OCI-LY7 (cell line): ENCODE measurements at regions of chr5 and their contacts with region 1.

Region 1: DNA sequence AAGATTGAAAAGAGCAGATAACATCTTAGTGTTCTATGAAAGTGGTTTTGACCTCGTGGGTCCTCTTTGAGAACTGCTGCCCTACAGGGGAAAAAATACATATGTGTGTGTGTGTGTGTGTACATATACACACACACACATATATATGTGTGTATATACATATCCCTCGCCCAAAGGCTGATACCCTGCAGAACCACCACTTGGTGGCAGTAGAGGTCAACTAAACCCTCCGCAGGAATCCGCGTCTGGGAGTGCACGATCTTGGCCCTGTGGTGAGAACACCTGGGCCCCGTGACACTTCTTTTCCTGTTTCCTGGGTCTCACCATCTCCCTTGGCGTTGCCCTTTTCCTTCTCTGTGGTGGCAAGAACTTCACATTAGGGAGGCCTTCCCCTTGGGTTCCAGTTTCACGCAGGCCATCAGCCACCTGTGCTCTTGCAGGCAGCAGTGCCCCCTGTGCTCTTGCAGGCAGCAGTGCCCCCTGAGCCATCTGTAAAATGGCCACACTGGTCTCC is 8.2 kb downstream of the IL9 start:
- DNase-seq: peak; percentile 78
- H3K4me3 ChIP-seq: no peak overlapping the region
- H3K27ac ChIP-seq: no peak overlapping the region
- H3K4me1 ChIP-seq: no peaks in the 10 kb centered on the region
- CTCF ChIP-seq: peak; percentile 94

Region 2: DNA sequence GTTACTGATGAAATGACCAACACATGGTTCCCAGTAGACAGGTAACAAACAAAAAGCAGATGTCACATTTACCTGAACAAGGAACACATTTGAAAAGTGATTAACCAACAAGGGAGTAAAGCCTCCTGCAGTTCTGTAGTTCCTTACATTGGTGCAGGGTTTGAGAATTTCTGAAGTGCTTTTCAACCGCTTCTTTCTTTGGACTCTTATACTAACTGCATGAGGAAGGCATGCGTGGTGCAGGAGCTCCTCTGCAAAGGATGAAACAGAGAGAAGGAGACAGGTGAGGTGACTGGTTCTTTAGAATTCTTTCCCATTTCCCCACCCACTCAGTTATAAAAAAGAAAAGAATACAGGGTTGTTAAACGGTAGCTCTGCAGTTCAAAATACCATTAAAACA is 12.9 kb after region 1 on chr5:
- CTCF ChIA-PET with region 1: no interaction called
- POLR2A ChIA-PET with region 1: no interaction called
- intact Hi-C with region 1: no loop called
- DNase-seq: no peak
- H3K4me3 ChIP-seq: no peak overlapping the region
- H3K27ac ChIP-seq: no peak overlapping the region
- H3K4me1 ChIP-seq: no peaks in the 10 kb centered on the region
- CTCF ChIP-seq: no peak

Region 3: DNA sequence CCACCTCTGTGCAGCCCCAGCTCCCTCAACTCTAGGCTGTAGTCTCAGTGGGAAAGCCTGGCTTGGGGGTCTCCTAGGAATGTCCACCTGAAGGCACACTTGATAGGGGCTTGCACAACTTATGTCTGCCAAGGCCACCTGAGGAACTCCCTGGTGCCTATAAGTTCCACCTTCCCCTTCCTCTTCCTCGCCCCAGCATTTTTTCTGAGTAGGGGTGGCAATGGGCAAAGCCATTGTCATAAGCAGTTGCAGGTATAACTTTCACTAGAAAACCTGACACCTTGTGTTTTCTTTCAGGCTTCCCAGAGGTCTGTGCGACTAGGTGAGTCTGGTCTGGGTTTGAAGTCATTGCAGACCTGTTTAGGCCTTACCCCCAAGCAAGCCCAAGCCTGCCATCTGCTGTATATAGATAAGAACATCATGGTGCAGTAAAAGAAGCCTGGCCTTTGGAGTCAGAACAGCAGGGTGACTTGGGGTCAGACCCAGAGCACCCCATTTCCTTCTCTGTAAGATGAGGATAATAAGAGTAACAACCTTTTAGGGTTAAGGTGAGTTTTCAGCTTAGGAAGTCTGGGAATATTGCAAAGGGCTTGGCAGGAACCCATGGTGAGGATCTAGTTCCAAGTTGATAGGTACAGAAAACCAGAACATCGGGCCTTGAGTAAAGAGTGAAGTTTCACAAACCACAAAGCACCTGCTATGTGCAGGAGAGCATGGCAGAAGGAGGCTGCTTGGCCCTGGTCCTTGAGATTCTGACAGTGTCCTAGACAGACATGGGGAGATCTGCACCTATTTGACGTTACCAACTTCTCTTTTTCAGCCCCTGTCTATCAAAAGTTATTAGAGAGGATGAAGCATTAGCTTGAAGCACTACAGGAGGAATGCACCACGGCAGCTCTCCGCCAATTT is 175.2 kb after region 1 on chr5:
- CTCF ChIA-PET with region 1: no interaction called
- POLR2A ChIA-PET with region 1: no interaction called
- intact Hi-C with region 1: loop called (anchors 1 kb)
- DNase-seq: peak; percentile 89
- H3K4me3 ChIP-seq: no peak overlapping the region
- H3K27ac ChIP-seq: no peak overlapping the region
- H3K4me1 ChIP-seq: peaks cover 18% of the 10 kb centered on the region
- CTCF ChIP-seq: peak; percentile 98

Region 4: DNA sequence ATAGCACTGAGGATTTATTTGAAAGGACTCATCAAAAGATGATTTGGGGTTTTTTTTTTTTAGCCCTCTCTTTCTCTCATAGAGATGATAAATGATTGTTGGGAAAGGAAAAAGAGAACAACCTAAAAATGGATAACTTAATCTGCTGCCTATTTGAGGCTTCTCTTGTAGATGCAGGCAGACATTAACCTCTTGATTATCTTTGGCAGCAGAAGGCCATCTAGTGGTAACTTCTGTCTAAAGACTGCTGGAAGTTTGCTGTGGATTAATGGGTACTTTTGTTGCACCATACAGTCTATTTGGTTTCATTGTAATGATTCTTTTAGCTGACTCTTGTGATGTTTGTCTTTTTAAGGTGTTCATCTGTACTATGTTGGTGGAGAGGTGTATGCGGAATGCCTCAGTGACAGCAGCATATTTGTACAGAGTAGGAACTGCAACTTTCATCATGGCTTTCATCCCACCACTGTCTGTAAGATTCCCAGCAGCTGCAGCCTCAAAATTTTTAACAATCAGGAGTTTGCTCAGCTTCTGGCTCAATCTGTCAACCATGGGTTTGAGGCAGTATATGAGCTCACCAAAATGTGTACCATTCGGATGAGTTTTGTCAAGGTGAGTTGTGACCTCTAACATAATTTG is 286.7 kb after region 1 on chr5:
- CTCF ChIA-PET with region 1: no interaction called
- POLR2A ChIA-PET with region 1: no interaction called
- intact Hi-C with region 1: loop called (anchors 2 kb)
- DNase-seq: peak; percentile 76
- H3K4me3 ChIP-seq: no peak overlapping the region
- H3K27ac ChIP-seq: peak overlapping the region; percentile 24
- H3K4me1 ChIP-seq: peaks cover 34% of the 10 kb centered on the region
- CTCF ChIP-seq: peak; percentile 94

Region 5: GRCh38 chr5:136424835-136425584 is 537.6 kb after region 1 on chr5:
- CTCF ChIA-PET with region 1: no interaction called
- POLR2A ChIA-PET with region 1: no interaction called
- intact Hi-C with region 1: loop called (anchors 2 kb)
- DNase-seq: peak; percentile 64
- H3K4me3 ChIP-seq: no peak overlapping the region
- H3K27ac ChIP-seq: no peak overlapping the region
- H3K4me1 ChIP-seq: no peaks in the 10 kb centered on the region
- CTCF ChIP-seq: peak; percentile 87